ENCODE measurements at regions of chr7 and their contacts with region 1.

Region 1: GRCh38 chr7:143334244-143334643 is 18.3 kb downstream of the CLCN1 start:
- DNase-seq: no peak
- ATAC-seq: no peak
- H3K4me3 Mint-ChIP-seq: no peak overlapping the region
- H3K27ac Mint-ChIP-seq: no peak overlapping the region
- H3K4me1 Mint-ChIP-seq: no peaks in the 10 kb centered on the region
- H3K27me3 Mint-ChIP-seq: peaks cover 20% of the 10 kb centered on the region

Region 2: GRCh38 chr7:143345428-143345900 is 11.2 kb after region 1 on chr7:
- CTCF ChIA-PET with region 1: interaction called, 33 read pairs
- POLR2A ChIA-PET with region 1: interaction called, 3 read pairs
- DNase-seq: peak; percentile 76
- ATAC-seq: peak; percentile 100
- H3K4me3 Mint-ChIP-seq: peak overlapping the region; percentile 65
- H3K27ac Mint-ChIP-seq: peak overlapping the region; percentile 53
- H3K4me1 Mint-ChIP-seq: peaks cover 9% of the 10 kb centered on the region
- H3K27me3 Mint-ChIP-seq: peaks cover 36% of the 10 kb centered on the region